ENCODE measurements at regions of chr15 and their contacts with region 1.

Region 1: DNA sequence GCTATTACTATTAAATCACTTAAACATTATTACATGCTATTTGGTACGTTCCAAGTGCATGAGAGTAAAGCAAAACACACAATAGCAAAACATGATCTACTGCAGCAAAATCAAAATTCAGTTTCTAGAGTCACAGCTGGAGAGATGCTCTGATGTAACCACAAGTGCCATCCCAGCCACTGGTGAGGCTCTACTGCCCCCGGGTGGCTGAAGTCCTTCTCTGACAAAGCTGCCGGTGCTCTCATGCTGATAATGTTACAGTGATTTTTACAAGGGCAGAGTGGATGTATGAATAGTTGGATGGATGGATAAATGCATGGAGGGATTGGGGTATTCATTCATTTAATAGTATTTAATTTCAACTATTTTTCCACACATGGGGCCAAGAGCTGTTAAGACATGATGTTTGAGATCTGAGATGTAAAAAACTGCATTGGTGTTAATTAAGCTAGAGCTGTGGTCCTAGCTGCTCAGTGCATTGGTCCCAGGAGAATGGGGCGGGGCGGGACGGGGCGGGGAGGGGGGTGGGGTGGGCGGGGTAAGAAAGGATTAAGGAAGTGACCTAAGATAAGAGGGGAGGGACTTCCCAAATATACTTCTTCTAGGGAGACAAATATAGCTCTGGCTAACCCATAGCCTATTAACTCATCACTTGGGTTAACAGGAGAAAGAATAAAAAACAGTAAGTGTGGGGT is 5.3 kb upstream of the SPESP1 start:
- DNase-seq: peak; percentile 13
- H3K4me3 ChIP-seq: no peak overlapping the region
- H3K27me3 ChIP-seq: peaks cover 6% of the 10 kb centered on the region
- CTCF ChIP-seq: peak; percentile 92

Region 2: GRCh38 chr15:67784090-67784781 is 1140.8 kb before region 1 on chr15:
- CTCF ChIA-PET with region 1: no interaction called
- POLR2A ChIA-PET with region 1: no interaction called
- DNase-seq: no peak
- H3K4me3 ChIP-seq: no peak overlapping the region
- H3K27me3 ChIP-seq: no peaks in the 10 kb centered on the region
- CTCF ChIP-seq: no peak

Region 3: DNA sequence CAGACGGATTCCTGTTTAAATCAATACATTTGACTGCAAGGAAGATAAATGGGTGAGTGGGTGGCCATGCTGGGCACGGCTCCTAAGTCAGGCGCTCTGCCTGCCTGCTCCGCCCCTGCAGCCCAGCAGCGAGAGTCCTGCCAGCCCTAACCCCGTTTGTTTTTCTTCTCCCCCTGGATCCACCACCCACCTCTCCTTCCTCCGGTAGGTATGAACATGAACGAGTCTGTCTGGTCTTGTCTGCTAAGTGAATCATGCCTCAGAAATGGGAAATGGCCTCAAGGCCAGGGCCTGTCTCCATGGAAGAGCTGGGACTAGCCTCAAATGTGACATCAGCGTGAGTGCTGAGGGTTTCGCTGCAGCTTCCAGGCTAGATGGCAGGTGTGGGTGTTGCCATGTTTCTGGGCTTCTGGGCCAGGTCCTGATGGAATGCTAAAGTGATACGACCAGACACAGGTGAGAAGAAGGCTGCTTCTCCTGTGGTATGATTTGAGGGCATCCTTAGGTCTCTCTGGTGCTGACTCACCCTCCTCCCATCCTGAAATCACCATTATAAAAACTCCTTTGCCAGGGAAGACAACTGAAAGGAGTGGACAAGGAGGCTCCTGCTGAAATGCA is 653.0 kb before region 1 on chr15:
- CTCF ChIA-PET with region 1: no interaction called
- POLR2A ChIA-PET with region 1: no interaction called
- DNase-seq: peak; percentile 62
- H3K4me3 ChIP-seq: no peak overlapping the region
- H3K27me3 ChIP-seq: no peaks in the 10 kb centered on the region
- CTCF ChIP-seq: no peak

Region 4: DNA sequence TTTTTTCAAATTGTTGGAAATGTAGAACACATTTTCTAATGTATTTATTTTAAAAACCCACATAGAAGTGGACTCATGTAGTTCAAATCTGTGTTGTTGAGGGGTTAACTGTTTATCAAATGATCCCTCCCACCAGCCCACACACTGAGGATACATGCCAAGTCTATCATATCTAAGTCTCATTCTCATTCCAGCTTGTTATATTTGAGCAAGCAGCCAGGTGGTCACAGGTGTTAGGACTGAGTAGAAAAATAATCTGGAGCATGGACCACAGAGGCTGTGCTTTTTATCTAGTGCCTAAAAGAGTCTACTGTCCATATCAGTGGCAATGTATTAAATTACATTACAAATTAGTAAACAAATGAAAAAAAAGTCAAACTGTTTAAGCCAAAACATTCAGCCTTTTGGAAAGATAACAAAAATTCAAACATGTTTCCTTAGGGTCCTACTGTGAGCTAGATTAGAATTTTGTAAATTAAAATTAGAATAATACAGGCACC is 15.4 kb before region 1 on chr15:
- CTCF ChIA-PET with region 1: interaction called, 15 read pairs
- POLR2A ChIA-PET with region 1: no interaction called
- DNase-seq: no peak
- H3K4me3 ChIP-seq: no peak overlapping the region
- H3K27me3 ChIP-seq: peaks cover 5% of the 10 kb centered on the region; the same call in 1 of the 2 replicates
- CTCF ChIP-seq: no peak

Region 5: GRCh38 chr15:68935400-68935937 is 10.5 kb after region 1 on chr15:
- CTCF ChIA-PET with region 1: interaction called, 16 read pairs
- POLR2A ChIA-PET with region 1: no interaction called
- DNase-seq: no peak
- H3K4me3 ChIP-seq: no peak overlapping the region
- H3K27me3 ChIP-seq: no peaks in the 10 kb centered on the region; the same call in 1 of the 2 replicates
- CTCF ChIP-seq: no peak

Region 6: DNA sequence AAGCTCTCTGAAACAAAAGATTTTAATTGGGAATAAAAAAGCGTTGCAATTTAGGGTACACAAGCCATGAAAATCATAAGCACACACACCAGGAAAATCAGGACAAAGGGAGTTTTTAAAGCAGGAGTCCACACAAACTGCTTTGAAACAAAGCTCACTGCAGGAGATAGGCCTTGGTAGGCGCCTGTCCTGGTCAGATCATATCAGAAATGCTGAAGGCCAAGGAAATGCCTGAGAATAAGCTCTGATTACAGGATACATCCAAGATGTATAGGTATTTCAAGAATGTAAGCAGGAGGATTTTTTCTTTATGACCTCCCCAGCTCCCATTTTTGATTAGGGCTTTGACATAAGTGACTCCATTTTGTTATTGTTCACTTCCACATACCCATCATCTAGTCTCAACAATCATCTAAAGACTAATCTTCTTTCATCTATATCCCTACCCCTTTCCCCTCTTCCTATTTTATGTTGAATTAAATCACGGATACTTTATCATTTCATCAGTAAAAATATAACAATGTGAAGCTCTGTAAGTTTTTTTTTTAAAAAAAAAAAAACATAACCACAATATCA is 24.0 kb after region 1 on chr15:
- CTCF ChIA-PET with region 1: no interaction called
- POLR2A ChIA-PET with region 1: no interaction called
- DNase-seq: no peak
- H3K4me3 ChIP-seq: no peak overlapping the region
- H3K27me3 ChIP-seq: no peaks in the 10 kb centered on the region
- CTCF ChIP-seq: no peak

Region 7: GRCh38 chr15:68980786-68981185 is 55.8 kb after region 1 on chr15:
- CTCF ChIA-PET with region 1: no interaction called
- POLR2A ChIA-PET with region 1: no interaction called
- DNase-seq: no peak
- H3K4me3 ChIP-seq: no peak overlapping the region
- H3K27me3 ChIP-seq: no peaks in the 10 kb centered on the region; the same call in 1 of the 2 replicates
- CTCF ChIP-seq: no peak